Sigmoid colon (tissue), 7 donors: ENCODE measurements at regions of chr3 and their contacts with region 1.

Region 1: GRCh38 chr3:52339612-52340011 is 23.5 kb downstream of the DNAH1 start:
- DNase-seq: no peak
- H3K4me3 ChIP-seq: no peak overlapping the region
- H3K27ac ChIP-seq: no peak overlapping the region
- H3K4me1 ChIP-seq: no peaks in the 10 kb centered on the region
- H3K27me3 ChIP-seq: no peaks in the 10 kb centered on the region
- CTCF ChIP-seq: peak; percentile 63 to 83 (median 70)
- EP300 ChIP-seq: no peak
- POLR2A ChIP-seq: no peak

Region 2: GRCh38 chr3:51941798-51942602 is 397.6 kb before region 1 on chr3 and contains the starts of genes PARP3 and RRP9:
- intact Hi-C with region 1: no loop called
- DNase-seq: peak; percentile 100
- H3K4me3 ChIP-seq: peak within 1 kb of the TSS; percentile 61 to 87 (median 75)
- H3K27ac ChIP-seq: peak within 1 kb of the TSS; percentile 89 to 97 (median 96)
- H3K4me1 ChIP-seq: peaks cover 0 to 37% (median 33%) of the 10 kb centered on the region in 4 donors
- H3K27me3 ChIP-seq: no peaks in the 10 kb centered on the region
- CTCF ChIP-seq: peak; percentile 97 to 100 (median 98)
- EP300 ChIP-seq: no peak
- POLR2A ChIP-seq: peak; percentile 63 to 68
- total RNA-seq, gene PARP3: 22.4 to 35.8 (median 26.7) TPM
- total RNA-seq, gene RRP9: 6.4 to 13.3 (median 12.4) TPM

Region 3: GRCh38 chr3:52001443-52001974 is 338.1 kb before region 1 on chr3:
- intact Hi-C with region 1: loop called (anchors 5 kb)
- DNase-seq: peak; percentile 85
- H3K4me3 ChIP-seq: no peak overlapping the region
- H3K27ac ChIP-seq: no peak overlapping the region
- H3K4me1 ChIP-seq: peaks cover 0 to 19% (median 15%) of the 10 kb centered on the region in 4 donors
- H3K27me3 ChIP-seq: peaks cover 0 to 12% (median 0%) of the 10 kb centered on the region in 3 donors
- CTCF ChIP-seq: peak; percentile 85 to 94 (median 92)
- EP300 ChIP-seq: no peak
- POLR2A ChIP-seq: no peak

Region 4: DNA sequence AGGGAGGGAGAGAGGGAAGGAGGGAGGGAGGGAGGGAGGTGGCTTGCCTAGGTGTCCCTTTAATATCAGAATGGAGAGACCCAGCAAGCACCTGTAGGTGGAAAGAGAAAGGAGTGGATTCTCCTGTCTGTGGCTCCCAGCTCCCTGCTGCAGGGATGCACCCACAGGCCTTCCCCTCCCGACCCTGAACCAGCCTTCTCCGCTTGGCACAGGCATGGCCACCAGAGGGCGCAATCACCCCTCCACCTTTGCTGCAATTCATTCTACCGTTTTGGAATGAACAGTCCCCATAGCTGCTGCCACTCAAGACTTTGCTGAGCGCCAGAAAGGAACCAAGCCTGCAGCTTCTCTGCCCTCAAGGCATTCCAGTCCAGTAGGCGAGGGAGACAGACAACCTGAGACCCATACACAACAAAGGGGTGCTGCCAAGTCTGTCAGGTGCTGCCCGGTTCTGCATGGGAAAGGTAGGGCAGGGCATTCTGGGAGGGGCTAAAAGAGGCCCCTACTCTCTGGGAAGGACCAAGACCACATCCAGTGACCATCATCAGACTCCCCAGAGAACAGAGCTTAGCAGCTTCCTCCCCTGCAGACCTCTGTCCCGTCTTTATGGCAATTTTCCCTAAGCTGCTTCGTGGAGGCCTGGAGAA is 119.1 kb before region 1 on chr3:
- intact Hi-C with region 1: loop called (anchors 1 kb)
- DNase-seq: peak; percentile 90
- H3K4me3 ChIP-seq: no peak overlapping the region
- H3K27ac ChIP-seq: no peak overlapping the region
- H3K4me1 ChIP-seq: peaks cover 0 to 33% (median 19%) of the 10 kb centered on the region in 4 donors
- H3K27me3 ChIP-seq: no peaks in the 10 kb centered on the region
- CTCF ChIP-seq: peak; percentile 73 to 93 (median 80)
- EP300 ChIP-seq: no peak
- POLR2A ChIP-seq: no peak

Region 5: GRCh38 chr3:52231502-52232293 is 107.9 kb before region 1 on chr3:
- intact Hi-C with region 1: loop called (anchors 1 kb)
- DNase-seq: no peak
- H3K4me3 ChIP-seq: no peak overlapping the region
- H3K27ac ChIP-seq: no peak overlapping the region
- H3K4me1 ChIP-seq: peaks cover 0 to 50% (median 35%) of the 10 kb centered on the region in 4 donors
- H3K27me3 ChIP-seq: no peaks in the 10 kb centered on the region
- CTCF ChIP-seq: peak; percentile 80 to 91 (median 84)
- EP300 ChIP-seq: no peak
- POLR2A ChIP-seq: no peak

Region 6: DNA sequence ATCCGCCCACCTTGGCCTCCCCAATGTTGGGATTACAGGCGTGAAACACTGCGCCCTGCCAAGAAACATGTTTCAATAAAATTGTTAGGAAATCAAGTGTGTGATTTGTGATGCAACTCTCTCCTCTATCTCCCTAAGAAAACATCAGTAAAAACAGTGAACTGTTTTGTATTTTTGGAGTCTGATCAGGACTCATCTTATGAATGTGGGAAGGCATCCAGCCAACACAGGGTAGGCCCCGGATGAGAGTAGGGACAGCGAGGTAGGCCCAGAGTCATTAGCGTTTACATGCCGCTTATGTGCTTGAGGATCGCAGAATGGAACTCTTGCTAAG is 52.9 kb before region 1 on chr3:
- intact Hi-C with region 1: loop called (anchors 2 kb)
- DNase-seq: peak; percentile 67
- H3K4me3 ChIP-seq: peak overlapping the region; percentile 76 to 89 (median 84)
- H3K27ac ChIP-seq: peak overlapping the region; percentile 97 to 99 (median 99)
- H3K4me1 ChIP-seq: peaks cover 0 to 17% (median 10%) of the 10 kb centered on the region in 4 donors
- H3K27me3 ChIP-seq: no peaks in the 10 kb centered on the region
- CTCF ChIP-seq: no peak
- EP300 ChIP-seq: no peak
- POLR2A ChIP-seq: no peak